ENCODE measurements at regions of chr10 and their contacts with region 1.

Region 1: DNA sequence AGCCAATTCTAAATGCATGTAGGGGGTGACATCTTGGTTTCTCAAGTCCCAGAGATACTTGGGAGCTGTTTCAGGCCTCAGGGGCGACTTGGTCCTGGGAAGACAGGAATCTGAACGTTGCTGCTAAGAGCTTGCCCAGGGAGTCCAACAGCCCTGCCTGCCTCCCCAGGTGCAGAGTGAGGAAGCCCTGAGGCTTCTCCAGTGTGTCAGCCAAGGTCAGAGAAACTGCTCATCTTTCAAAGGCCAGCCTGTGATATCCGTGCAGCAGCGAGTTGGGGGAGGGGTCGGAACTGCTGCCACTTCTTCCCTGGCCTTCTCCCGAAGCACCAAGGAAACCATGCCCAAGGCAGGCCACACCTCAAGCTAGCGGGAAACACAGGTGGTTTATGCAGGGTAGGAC is 9.7 kb downstream of the GDF2 start:
- DNase-seq: no peak
- ATAC-seq: no peak

Region 2: GRCh38 chr10:47356708-47357582 is 25.0 kb after region 1 on chr10:
- intact Hi-C with region 1: loop called in 1 of 2 experiments (anchors 1 kb)
- DNase-seq: no peak
- ATAC-seq: no peak

Region 3: GRCh38 chr10:48306265-48306869 is 974.4 kb after region 1 on chr10 and contains the start of gene MAPK8:
- intact Hi-C with region 1: no loop called
- DNase-seq: peak; percentile 95
- ATAC-seq: peak; percentile 97 to 98
- total RNA-seq, gene MAPK8: 28.1 to 29.5 TPM